ENCODE measurements at regions of chr13 and their contacts with region 1.

Region 1: DNA sequence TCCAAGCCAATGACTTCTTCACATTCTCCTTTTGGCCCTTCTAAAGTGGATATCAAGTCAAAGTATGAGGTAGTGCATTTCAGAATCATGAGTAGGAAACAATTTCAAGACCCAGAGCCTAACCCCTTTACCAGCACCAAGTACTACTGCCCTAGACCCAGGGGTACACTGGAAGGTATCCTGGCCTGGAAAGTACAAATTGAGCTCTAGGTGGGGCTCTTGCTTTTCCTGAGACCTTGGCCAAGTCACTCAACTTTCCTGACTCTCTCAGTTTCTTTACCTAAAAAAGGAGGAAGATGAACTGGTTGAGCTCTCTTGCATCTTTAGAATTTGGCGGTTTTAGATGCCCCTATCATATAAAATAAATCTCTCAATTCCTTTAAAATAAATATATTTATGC is 204.7 kb downstream of the FGF14 start:
- DNase-seq: no peak
- ATAC-seq: peak in 1 of 8 donors; percentile 45
- H3K4me3 ChIP-seq: no peak overlapping the region
- H3K27ac ChIP-seq: no peak overlapping the region
- H3K4me1 ChIP-seq: peaks cover 0 to 5% (median 0%) of the 10 kb centered on the region in 9 donors
- H3K27me3 ChIP-seq: no peaks in the 10 kb centered on the region
- CTCF ChIP-seq: peak in 7 of 9 donors; percentile 22 to 49 (median 36)

Region 2: DNA sequence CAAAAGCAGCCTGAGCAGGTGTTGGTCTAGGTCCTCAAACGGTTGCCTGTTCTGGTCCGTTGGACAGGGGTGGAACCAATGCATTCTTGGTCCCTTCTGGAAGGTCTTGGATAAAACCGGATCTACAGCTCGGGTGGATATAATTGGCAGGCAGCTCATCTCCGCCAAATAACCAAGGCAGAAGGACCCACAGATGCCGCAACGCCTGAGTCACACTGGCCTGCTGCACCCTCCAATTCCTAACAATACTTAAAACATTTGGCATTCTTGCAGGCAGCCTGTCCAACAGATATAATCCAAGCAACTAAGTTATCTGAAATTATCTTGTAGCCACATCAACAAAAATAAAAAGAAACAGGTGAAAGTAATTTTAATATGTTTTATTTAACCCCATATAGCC is 263.6 kb after region 1 on chr13:
- intact Hi-C with region 1: loop called in 5 of 10 experiments (anchors 5 to 10 kb)
- DNase-seq: no peak
- ATAC-seq: no peak
- H3K4me3 ChIP-seq: no peak overlapping the region
- H3K27ac ChIP-seq: no peak overlapping the region
- H3K4me1 ChIP-seq: no peaks in the 10 kb centered on the region
- H3K27me3 ChIP-seq: peaks cover 0 to 9% (median 0%) of the 10 kb centered on the region in 7 donors
- CTCF ChIP-seq: no peak

Region 3: DNA sequence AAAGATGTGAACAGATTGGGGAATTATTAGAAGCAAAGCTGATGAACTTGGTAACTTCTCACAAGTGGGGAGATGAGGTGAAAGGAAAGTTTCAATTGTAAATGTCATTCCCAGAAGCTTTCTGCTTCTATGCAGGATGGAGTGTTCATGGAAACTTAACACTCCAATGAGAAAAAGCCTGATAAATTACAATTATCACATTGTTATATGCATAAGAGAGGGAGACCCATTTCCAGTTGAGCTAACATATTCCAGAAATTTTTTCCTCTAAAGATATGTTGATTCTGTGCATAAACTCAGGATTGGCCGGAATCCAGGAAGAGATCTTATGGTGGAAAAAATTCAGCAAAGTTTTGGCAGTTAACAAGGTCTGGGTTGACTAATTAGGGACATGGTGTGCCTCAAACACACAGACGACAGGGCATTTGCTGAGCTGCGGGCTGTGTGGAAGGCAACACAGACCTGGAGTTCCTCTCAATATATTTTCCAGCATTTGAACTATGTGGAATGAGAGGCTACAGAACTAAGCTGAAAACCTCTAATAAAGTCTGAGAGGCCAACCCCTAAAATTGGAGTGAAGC is 269.5 kb after region 1 on chr13:
- intact Hi-C with region 1: loop called in 1 of 10 experiments (anchors 10 kb)
- DNase-seq: no peak
- ATAC-seq: no peak
- H3K4me3 ChIP-seq: no peak overlapping the region
- H3K27ac ChIP-seq: no peak overlapping the region
- H3K4me1 ChIP-seq: no peaks in the 10 kb centered on the region
- H3K27me3 ChIP-seq: peaks cover 0 to 9% (median 0%) of the 10 kb centered on the region in 7 donors
- CTCF ChIP-seq: no peak